Sciatic nerve (tissue), 2 donors: ENCODE measurements at regions of chr11 and their contacts with region 1.

Region 1: GRCh38 chr11:81301166-81301830 is 1432.4 kb downstream of the FAM181B start:
- DNase-seq: no peak
- ATAC-seq: no peak

Region 2: GRCh38 chr11:80309301-80309700 is 992.0 kb before region 1 on chr11:
- intact Hi-C with region 1: no loop called
- DNase-seq: no peak
- ATAC-seq: no peak

Region 3: DNA sequence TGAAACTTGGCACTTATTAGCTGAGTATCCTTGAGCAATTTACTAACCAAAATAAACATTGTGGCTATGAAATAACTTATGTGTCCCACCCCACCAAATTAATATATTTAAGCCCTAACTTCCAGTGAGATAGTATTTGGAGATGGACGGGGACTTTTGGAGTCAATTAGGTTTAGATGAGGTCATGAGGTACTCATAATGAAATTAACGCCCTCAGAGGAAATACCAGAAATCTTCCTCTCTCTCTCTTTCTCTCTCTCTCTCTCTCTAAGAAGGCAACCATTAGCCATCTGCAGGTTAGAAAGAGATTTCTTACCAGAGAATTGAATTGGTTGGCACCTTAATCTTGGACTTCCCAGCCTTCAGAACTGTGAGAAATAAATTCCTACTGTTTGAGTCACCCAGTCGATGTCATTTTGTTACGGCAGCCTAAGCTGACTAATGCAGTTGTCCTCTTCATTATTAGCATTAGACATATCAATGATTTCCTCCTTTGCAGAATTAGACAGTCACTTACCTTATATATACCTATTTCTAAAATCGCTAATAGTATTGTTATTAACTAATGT is 148.4 kb after region 1 on chr11:
- intact Hi-C with region 1: no loop called
- DNase-seq: no peak
- ATAC-seq: no peak

Region 4: DNA sequence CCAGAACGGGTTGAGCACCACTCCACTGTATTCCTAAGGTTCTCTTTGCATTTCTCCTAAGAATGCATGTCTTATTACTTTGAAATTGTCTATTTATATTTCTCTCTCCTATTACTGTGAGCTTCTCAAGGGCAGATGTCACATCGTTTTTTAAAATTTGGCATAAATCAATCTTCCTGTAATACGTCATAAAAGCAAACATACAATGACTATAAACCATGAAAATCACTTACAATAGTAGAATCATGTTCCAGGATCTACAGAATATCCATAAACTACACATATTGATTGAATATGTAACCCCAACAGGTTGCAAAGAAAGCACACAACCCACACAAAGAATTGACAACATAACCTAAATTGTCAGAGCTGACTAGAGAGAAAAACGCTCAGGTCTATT is 1147.6 kb after region 1 on chr11:
- intact Hi-C with region 1: loop called (anchors 5 kb)
- DNase-seq: no peak
- ATAC-seq: no peak

Region 5: DNA sequence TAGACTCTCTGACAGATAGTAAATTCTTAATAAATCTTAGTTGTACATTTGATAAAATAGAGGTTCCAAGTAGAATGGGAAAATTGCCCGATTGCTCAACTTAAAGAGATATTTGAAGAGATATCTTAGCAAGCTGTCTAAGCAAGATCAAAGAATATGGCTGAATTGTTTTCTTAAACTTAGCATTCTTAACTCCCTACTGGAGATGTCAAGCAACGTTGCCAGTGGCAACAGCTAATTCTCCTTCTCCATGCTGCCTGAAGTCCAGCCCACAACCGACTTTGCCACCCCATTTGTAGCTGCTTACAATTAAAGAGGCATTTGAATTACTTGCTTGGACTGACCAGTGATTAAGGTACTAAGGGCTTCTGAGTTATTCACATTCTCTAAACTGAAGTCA is 1338.0 kb after region 1 on chr11:
- intact Hi-C with region 1: no loop called
- DNase-seq: no peak
- ATAC-seq: no peak